SK-N-SH (cell line): ENCODE measurements at regions of chr11 and their contacts with region 1.

Region 1: GRCh38 chr11:62542750-62543567 is 3.6 kb downstream of the AHNAK start:
- DNase-seq: peak; percentile 90
- H3K4me3 ChIP-seq: peak overlapping the region; percentile 75 to 98
- H3K27ac ChIP-seq: peak overlapping the region in 1 of 2 experiments; percentile 82; a peak in 2 of 4 replicates
- H3K4me1 ChIP-seq: peaks cover 50 to 72% of the 10 kb centered on the region in 2 experiments
- H3K27me3 ChIP-seq: no peaks in the 10 kb centered on the region
- CTCF ChIP-seq: peak; percentile 92
- EP300 ChIP-seq: no peak
- RAD21 ChIP-seq: peak; percentile 87

Region 2: DNA sequence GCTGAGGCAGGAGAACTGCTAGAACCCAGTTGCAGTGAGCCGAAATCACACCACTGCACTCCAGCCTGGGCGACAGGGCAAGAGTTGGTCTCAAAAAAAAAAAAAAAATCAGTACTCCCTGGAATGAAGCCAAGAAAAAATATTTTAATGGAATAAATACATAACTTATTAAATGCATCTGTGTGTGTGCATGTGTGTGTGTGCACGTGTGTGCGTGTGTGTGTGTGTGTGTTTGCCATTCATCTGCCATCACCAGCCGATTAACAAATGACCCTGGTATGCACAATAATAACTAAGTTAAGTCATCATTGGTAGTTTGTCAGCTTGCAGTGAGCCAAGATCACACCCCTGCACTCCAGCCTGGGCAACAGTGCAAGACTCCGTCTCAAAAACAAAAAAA is 159.1 kb before region 1 on chr11:
- CTCF ChIA-PET with region 1: interaction called, 13 read pairs
- POLR2A ChIA-PET with region 1: interaction called, 3 read pairs
- DNase-seq: no peak
- H3K4me3 ChIP-seq: no peak overlapping the region
- H3K27ac ChIP-seq: no peak overlapping the region
- H3K4me1 ChIP-seq: peaks cover 0 to 11% of the 10 kb centered on the region in 2 experiments; a peak in 2 of 4 replicates
- H3K27me3 ChIP-seq: no peaks in the 10 kb centered on the region; the same call in 1 of the 2 replicates
- CTCF ChIP-seq: no peak
- EP300 ChIP-seq: no peak
- RAD21 ChIP-seq: no peak

Region 3: DNA sequence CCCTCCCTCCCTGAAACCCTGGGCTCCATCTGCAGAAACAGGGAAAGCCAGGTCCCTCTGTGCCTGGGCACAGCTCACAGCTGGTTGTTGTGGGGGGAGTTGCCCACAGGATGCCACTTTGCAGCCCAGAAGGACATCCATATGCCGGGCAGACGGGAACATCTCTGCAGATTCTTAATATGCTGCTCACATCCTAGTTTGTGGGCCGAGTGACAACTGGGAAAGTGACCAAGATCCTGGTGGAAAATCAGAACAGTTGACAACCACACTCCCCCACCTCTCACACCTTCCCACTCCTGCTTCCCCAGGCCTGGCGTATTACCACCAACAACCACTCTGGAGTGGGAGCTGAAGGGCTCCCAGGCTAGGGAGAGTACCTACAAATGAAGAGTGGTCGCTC is 131.4 kb before region 1 on chr11:
- CTCF ChIA-PET with region 1: interaction called, 11 read pairs
- POLR2A ChIA-PET with region 1: no interaction called
- DNase-seq: no peak
- H3K4me3 ChIP-seq: no peak overlapping the region
- H3K27ac ChIP-seq: no peak overlapping the region; a peak in 1 of 4 replicates
- H3K4me1 ChIP-seq: peaks cover 0 to 22% of the 10 kb centered on the region in 2 experiments; a peak in 1 of 4 replicates
- H3K27me3 ChIP-seq: no peaks in the 10 kb centered on the region
- CTCF ChIP-seq: no peak
- EP300 ChIP-seq: no peak
- RAD21 ChIP-seq: no peak

Region 4: GRCh38 chr11:62444236-62444833 is 98.6 kb before region 1 on chr11:
- CTCF ChIA-PET with region 1: interaction called, 16 read pairs
- POLR2A ChIA-PET with region 1: no interaction called
- DNase-seq: peak; percentile 92
- H3K4me3 ChIP-seq: peak overlapping the region; percentile 55 to 69
- H3K27ac ChIP-seq: peak overlapping the region; percentile 83 to 91
- H3K4me1 ChIP-seq: peaks cover 19 to 22% of the 10 kb centered on the region in 2 experiments
- H3K27me3 ChIP-seq: no peaks in the 10 kb centered on the region
- CTCF ChIP-seq: no peak
- EP300 ChIP-seq: no peak
- RAD21 ChIP-seq: no peak

Region 5: DNA sequence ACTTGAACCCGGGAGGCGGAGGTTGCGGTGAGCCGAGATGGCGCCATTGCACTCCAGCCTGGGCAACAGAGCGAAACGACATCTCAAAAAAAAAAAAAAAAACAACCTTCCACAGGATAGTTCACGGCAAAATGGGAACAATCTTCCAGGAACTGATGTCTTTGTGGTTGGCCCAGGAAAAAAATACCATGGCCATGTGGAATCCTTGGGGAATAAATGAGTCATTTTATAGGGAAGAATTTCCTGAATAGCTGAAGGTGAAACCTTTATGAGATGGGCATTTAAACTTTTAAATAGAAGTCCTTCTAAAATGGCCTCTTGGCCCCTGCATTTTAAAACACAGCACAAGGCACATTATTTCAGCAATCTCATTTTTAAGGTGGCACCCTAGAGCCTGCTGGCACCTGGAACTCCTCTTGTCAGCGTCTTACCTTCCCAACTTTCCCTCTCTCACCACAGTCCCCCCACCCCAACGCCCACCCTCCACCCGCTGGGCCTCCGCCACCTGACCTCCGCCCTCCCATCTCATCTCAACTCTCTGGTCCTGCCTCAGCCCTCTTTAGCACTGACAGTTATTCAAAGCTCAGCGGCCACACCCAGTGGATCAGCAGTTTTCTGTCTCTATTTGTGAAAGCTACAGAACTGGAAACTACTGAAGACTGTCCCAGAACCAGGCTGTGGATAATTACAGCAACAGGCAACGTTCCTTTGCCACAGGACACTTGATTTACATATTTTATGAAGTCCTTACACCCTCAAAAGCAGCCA is 81.0 kb before region 1 on chr11:
- CTCF ChIA-PET with region 1: interaction called, 15 read pairs
- POLR2A ChIA-PET with region 1: no interaction called
- DNase-seq: no peak
- H3K4me3 ChIP-seq: no peak overlapping the region
- H3K27ac ChIP-seq: peak overlapping the region in 1 of 2 experiments; percentile 35; a peak in 2 of 4 replicates
- H3K4me1 ChIP-seq: peaks cover 4 to 9% of the 10 kb centered on the region in 2 experiments; a peak in 3 of 4 replicates
- H3K27me3 ChIP-seq: no peaks in the 10 kb centered on the region
- CTCF ChIP-seq: no peak
- EP300 ChIP-seq: no peak; a peak in 1 of 4 replicates
- RAD21 ChIP-seq: no peak

Region 6: GRCh38 chr11:62497132-62497915 is 45.6 kb before region 1 on chr11:
- CTCF ChIA-PET with region 1: interaction called, 32 read pairs
- POLR2A ChIA-PET with region 1: no interaction called
- DNase-seq: peak; percentile 66
- H3K4me3 ChIP-seq: no peak overlapping the region
- H3K27ac ChIP-seq: peak overlapping the region in 1 of 2 experiments; percentile 55; a peak in 2 of 4 replicates
- H3K4me1 ChIP-seq: peaks cover 3 to 10% of the 10 kb centered on the region in 2 experiments; a peak in 2 of 4 replicates
- H3K27me3 ChIP-seq: no peaks in the 10 kb centered on the region
- CTCF ChIP-seq: peak; percentile 56
- EP300 ChIP-seq: no peak
- RAD21 ChIP-seq: peak; percentile 79

Region 7: DNA sequence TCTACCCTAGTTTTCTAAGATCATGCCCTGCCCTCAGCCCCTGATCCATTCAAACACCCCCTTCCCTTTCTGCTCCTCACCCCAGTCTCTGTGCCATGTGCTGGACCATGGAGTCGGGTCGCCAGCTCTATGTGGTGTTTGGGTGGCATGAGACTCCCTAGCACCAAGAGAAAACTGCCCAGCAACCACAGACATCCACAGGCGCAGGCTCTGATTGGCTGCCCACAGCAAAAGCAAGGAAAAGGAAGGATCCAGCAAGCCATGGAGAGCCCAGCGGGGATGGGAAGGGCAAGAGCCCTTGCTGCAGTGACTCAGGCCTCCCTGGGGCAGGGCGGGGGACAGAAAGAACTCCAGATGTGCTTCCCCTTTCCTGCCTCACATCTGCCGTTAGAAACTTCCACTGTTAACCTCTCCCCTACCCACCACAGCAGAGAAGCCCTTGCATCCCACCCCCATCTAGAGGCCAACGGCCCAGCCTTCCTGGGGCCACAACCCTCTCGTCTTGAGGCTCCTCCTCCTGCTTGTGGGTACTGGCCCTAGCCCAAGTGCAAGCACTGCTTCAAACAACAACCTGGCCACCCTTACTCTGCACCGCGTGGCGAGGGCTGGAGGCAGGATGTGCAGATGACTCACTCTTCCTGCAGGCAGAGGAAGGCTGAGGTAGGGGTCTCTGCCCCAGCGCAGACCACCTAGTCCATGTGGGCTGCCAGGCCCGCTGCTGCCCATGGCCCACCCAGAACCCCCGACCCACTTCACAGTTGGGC is 13.3 kb after region 1 on chr11:
- CTCF ChIA-PET with region 1: interaction called, 90 read pairs
- POLR2A ChIA-PET with region 1: interaction called, 6 read pairs
- DNase-seq: peak; percentile 90
- H3K4me3 ChIP-seq: no peak overlapping the region; a peak in 1 of 4 replicates
- H3K27ac ChIP-seq: peak overlapping the region; percentile 85 to 97
- H3K4me1 ChIP-seq: peaks cover 40 to 79% of the 10 kb centered on the region in 2 experiments
- H3K27me3 ChIP-seq: no peaks in the 10 kb centered on the region
- CTCF ChIP-seq: no peak
- EP300 ChIP-seq: peak in 1 of 2 experiments; percentile 42; a peak in 1 of 4 replicates
- RAD21 ChIP-seq: no peak

Region 8: GRCh38 chr11:62580959-62581715 is 38.2 kb after region 1 on chr11:
- CTCF ChIA-PET with region 1: no interaction called
- POLR2A ChIA-PET with region 1: no interaction called
- DNase-seq: no peak
- H3K4me3 ChIP-seq: no peak overlapping the region
- H3K27ac ChIP-seq: no peak overlapping the region
- H3K4me1 ChIP-seq: no peaks in the 10 kb centered on the region
- H3K27me3 ChIP-seq: no peaks in the 10 kb centered on the region
- CTCF ChIP-seq: no peak
- EP300 ChIP-seq: no peak
- RAD21 ChIP-seq: no peak

Region 9: GRCh38 chr11:62805076-62805892 is 262.3 kb after region 1 on chr11 and contains the start of gene NXF1:
- CTCF ChIA-PET with region 1: no interaction called
- POLR2A ChIA-PET with region 1: no interaction called
- DNase-seq: peak; percentile 99
- H3K4me3 ChIP-seq: peak within 1 kb of the TSS; percentile 91 to 94
- H3K27ac ChIP-seq: peak within 1 kb of the TSS; percentile 75 to 83
- H3K4me1 ChIP-seq: peaks cover 8 to 18% of the 10 kb centered on the region in 2 experiments
- H3K27me3 ChIP-seq: no peaks in the 10 kb centered on the region
- CTCF ChIP-seq: 0 out of 2 replicates have a peak, but pooled peaks have one; percentile 14
- EP300 ChIP-seq: no peak
- RAD21 ChIP-seq: no peak
- polyA plus RNA-seq, gene NXF1: 47.6 and 59.7 TPM in 2 replicates